BJ (cell line): ENCODE measurements at regions of chr9 and their contacts with region 1.

Region 1: GRCh38 chr9:7058473-7058872 is 300.7 kb downstream of the KDM4C start:
- DNase-seq: no peak
- H3K4me3 ChIP-seq: no peak overlapping the region
- H3K27me3 ChIP-seq: no peaks in the 10 kb centered on the region
- CTCF ChIP-seq: no peak

Region 2: DNA sequence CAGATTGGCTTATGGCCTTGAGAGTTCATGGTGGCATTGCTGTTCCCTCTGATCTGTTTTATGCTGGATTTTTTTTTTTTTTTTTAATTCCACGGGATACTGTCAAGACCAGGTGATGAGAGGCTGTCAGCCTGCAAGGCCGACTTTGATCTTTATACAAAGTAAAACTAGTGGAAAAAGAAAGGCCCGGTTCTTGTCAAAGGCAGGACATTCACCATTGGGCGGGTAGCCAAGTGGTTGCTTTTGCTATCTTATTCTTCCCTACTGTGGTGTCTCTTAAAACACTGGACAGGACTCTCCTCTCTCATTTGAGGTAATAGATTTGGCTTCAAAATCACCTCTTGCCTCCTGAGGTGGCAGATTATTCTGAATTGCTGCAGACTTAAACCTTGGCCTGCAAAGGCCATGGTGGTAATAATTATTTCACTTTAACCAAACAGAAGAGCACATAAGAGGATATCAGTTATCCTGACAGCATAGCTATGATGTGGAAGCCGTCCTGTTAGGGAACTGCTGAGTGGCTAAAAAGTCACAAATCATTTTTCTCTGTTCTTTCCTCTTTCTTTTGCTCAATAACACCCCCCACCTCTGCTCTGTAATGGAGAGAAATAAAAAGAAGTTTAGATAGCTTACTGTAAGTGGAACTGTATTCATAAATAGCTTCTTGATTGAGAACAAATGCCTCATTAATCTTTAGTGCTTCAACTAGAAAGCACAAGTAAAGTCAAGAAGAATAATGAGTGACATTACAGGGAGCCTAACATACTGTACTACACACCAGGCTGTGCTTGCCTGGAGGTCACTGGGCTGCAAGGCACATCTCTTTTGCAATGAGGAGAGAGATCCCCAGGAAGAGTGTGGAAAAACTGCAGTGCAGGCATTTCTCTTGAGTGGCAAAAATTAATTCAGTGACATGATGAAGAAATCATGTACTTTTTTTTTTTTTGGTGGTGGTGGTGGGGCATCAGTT is 25.1 kb before region 1 on chr9:
- CTCF ChIA-PET with region 1: interaction called, 10 read pairs
- POLR2A ChIA-PET with region 1: no interaction called
- DNase-seq: no peak
- H3K4me3 ChIP-seq: no peak overlapping the region
- H3K27me3 ChIP-seq: no peaks in the 10 kb centered on the region
- CTCF ChIP-seq: no peak

Region 3: DNA sequence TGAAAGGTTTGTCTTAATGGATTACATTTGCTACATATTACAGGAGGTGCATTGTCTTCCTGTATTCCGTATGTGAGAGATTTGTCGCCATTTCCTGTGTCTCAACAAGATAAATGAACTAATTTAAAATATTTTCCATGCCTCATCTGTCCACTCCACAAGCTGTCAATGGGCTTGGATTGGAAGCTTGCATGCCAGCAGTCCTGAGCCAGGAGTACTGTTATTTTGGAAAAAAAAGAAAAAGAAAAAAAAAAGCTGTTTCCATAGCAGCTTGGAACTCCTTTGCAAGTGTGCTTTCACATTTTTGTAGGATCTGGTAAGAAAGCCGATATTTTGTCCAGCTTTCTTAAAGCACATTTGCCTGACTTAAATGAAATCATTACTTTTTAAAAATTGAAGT is 30.1 kb after region 1 on chr9:
- CTCF ChIA-PET with region 1: no interaction called
- POLR2A ChIA-PET with region 1: no interaction called
- DNase-seq: no peak
- H3K4me3 ChIP-seq: no peak overlapping the region
- H3K27me3 ChIP-seq: no peaks in the 10 kb centered on the region
- CTCF ChIP-seq: no peak